ENCODE measurements at regions of chr6 and their contacts with region 1.

Region 1: GRCh38 chr6:142146828-142147662 is at the starts of genes NMBR and VTA1:
- DNase-seq: peak; percentile 96 to 98
- ATAC-seq: peak; percentile 99 to 100 (median 100)
- H3K4me3 ChIP-seq: peak within 1 kb of the TSS; percentile 85
- H3K27ac ChIP-seq: peak within 1 kb of the TSS; percentile 83
- H3K4me1 ChIP-seq: peaks cover 22% of the 10 kb centered on the region
- H3K27me3 ChIP-seq: peaks cover 0 to 2% (median 0%) of the 10 kb centered on the region in 3 donors
- CTCF ChIP-seq: peak; percentile 91
- total RNA-seq, gene NMBR: not detected
- total RNA-seq, gene VTA1: 46.9 to 57.9 (median 54.2) TPM

Region 2: DNA sequence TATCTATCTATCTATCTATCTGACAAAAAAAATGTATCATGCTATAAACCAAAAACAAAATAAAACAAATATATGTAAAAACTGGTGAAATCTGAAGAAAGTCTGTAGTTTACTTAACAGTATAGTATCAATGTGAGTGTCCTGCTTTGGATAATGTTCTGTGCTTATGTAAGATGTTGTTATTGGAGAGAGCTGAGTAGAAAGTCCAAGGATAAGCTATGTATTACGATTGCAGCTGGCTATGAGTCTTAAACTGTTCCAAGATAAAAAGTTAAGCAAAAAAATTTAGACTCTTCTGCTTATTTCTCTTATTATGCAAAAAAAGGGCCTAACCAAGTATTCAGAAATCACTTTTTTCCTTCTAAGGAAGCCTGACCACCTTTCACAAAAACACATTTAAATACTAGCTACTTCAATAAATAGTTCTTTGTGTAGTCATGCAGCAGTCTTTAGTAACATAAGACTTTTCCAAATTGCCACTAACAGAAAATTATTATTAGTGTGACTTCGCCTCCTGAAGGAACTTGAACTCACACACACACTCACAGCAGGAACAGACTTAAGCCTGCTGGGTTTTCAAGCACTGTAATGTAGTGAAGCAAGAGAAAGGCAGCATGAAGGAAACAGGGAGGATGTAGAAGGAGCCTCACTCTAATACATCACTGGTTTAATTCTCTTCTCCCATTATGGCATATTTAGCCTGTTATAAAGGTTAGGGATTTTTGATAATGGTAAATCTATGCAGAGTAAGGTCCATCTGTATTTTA is 280.1 kb before region 1 on chr6:
- intact Hi-C with region 1: no loop called
- DNase-seq: no peak
- ATAC-seq: no peak
- H3K4me3 ChIP-seq: no peak overlapping the region
- H3K27ac ChIP-seq: no peak overlapping the region
- H3K4me1 ChIP-seq: no peaks in the 10 kb centered on the region
- H3K27me3 ChIP-seq: no peaks in the 10 kb centered on the region
- CTCF ChIP-seq: no peak

Region 3: DNA sequence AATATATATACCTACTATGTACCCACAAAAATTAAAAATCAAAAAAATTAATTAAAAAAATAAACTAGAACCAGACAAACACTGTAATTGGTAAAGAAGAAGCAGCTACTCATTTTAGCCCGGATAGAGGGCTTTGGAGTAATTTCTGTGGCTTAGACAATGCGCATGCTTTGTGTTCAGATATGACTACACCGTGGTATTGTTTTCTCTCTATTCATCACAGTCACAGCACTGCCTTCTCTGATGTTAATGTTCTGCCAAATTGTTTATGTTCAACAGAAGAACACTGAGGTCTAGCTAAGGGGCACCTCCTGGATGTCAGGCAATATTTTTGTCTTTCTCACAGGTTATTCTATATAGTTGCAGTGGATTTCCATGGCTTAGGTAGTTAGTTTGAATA is 91.8 kb before region 1 on chr6:
- intact Hi-C with region 1: no loop called
- DNase-seq: no peak
- ATAC-seq: no peak
- H3K4me3 ChIP-seq: no peak overlapping the region
- H3K27ac ChIP-seq: no peak overlapping the region
- H3K4me1 ChIP-seq: no peaks in the 10 kb centered on the region
- H3K27me3 ChIP-seq: no peaks in the 10 kb centered on the region
- CTCF ChIP-seq: no peak

Region 4: DNA sequence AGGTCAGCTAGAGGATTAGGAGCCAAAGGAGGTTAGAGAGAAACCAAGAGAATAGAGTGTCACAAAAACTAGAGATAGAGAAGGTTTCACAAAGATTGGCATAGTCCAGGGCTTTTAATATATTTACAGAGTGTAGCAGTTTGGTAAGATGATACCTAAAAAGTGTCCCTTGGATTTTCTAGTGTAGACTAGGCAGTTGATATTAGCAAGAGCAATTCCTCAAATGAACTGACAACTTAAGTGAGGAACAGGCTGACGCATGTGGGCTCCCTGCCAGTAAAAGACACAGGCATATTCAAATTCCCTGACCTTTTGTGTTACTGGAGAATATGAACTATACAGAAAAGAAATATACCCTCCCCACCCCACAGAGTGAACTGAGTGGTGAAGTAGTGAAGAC is 40.2 kb after region 1 on chr6:
- intact Hi-C with region 1: loop called in 1 of 2 experiments (anchors 5 kb)
- DNase-seq: peak; percentile 27 to 55
- ATAC-seq: peak; percentile 25 to 89 (median 66)
- H3K4me3 ChIP-seq: no peak overlapping the region
- H3K27ac ChIP-seq: no peak overlapping the region
- H3K4me1 ChIP-seq: peaks cover 14% of the 10 kb centered on the region
- H3K27me3 ChIP-seq: no peaks in the 10 kb centered on the region
- CTCF ChIP-seq: no peak

Region 5: DNA sequence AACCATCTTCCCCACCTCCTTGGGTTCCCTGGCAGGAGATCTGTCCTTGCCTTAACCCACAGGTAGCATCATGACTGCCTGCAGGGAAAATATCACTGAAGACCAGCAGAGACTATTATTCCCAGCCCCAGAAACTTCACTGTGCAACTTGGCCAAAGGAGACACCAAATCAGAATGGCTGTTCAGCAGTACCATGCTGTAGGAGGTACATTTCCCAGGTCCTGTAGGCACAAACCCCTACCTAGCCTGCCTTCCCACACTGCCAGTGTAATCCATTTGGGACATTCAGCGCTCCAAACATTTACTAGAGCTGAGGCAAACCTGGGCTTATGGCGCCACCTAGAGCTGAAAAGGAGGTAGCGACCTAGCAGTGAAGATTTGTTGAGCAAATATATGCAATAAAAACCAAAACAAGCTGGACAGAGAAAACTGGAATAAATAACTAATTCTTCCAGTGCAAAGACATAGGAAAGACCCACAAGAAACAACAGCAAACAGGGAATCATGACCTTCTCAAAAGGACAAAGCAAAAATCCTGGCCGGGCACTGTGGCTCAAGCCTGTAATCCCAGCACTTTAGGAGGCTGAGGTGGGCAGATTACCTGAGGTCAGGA is 60.3 kb after region 1 on chr6:
- intact Hi-C with region 1: loop called (anchors 2 to 5 kb)
- DNase-seq: peak in 1 of 2 donors; percentile 52
- ATAC-seq: peak; percentile 56 to 91 (median 79)
- H3K4me3 ChIP-seq: no peak overlapping the region
- H3K27ac ChIP-seq: no peak overlapping the region
- H3K4me1 ChIP-seq: no peaks in the 10 kb centered on the region
- H3K27me3 ChIP-seq: no peaks in the 10 kb centered on the region
- CTCF ChIP-seq: peak; percentile 65

Region 6: GRCh38 chr6:142387997-142388815 is 241.2 kb after region 1 on chr6:
- intact Hi-C with region 1: loop called in 1 of 2 experiments (anchors 2 kb)
- DNase-seq: no peak
- ATAC-seq: peak in 1 of 4 donors; percentile 49
- H3K4me3 ChIP-seq: no peak overlapping the region
- H3K27ac ChIP-seq: no peak overlapping the region
- H3K4me1 ChIP-seq: no peaks in the 10 kb centered on the region
- H3K27me3 ChIP-seq: no peaks in the 10 kb centered on the region
- CTCF ChIP-seq: peak; percentile 46

Measured in psoas muscle (tissue), 8 donors.